ENCODE measurements at regions of chr6 and their contacts with region 1.

Region 1: DNA sequence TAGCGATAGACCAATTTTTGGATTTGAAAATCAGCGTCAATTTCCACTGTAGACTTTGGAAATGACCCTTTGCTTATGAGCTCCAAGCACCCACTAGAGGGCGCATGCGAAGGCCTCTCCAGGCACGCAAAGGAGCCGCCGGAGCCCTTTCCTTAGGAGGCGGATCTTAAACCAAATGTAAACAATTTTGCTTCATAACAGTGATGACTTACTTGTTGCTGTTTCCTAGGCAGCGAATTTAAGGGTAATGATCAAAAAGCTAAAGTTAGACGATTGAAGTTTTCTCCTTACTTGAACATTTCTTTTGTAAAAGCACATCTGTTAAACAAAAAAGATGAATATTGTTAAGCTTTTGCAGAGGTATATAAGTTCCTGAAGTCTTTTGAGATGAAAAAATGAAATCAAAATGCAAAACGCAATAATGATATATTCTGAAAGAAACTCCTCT is 29.2 kb upstream of the EXOC2 start:
- DNase-seq: peak; percentile 81
- H3K4me3 Mint-ChIP-seq: no peak overlapping the region
- H3K27ac Mint-ChIP-seq: no peak overlapping the region
- H3K4me1 Mint-ChIP-seq: peaks cover 14% of the 10 kb centered on the region
- H3K27me3 Mint-ChIP-seq: peaks cover 14% of the 10 kb centered on the region

Region 2: DNA sequence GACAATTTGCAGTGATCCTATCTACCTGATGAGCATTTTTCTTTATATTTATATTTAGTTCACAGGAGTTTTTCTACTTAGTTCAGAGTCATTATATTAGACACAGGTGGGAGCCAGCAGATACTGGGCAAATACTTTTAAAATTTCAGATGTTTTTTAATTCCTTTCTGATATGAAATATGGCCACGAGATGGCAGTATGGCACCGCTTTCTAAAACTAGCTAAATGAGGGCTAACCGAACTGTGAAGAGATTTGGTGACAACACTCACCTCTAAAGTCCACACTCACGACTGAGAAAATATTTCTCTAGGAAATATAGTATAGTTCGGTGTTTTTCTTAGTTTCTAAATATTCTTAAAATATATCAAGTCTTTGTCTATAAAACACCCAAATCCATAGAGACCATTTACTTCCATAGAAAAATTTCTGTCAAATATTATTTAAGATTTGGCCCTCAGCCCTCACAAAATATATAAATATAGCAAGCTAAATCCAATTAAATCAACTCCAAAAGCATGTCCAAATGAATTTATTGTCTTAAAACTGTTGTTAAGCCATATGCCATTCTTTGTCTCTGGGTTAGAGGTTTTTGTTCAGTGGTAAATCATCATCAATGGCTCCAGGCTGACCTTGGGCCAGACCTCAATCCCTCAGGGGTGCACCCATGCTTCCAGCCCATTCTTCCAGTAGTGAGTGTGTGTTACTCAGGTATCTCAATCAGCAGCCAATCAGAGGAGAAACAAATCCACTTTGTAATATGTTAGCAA is 128.8 kb before region 1 on chr6:
- CTCF ChIA-PET with region 1: interaction called, 23 read pairs
- POLR2A ChIA-PET with region 1: no interaction called
- DNase-seq: peak; percentile 70
- H3K4me3 Mint-ChIP-seq: no peak overlapping the region
- H3K27ac Mint-ChIP-seq: no peak overlapping the region
- H3K4me1 Mint-ChIP-seq: peaks cover 16% of the 10 kb centered on the region
- H3K27me3 Mint-ChIP-seq: no peaks in the 10 kb centered on the region

Region 3: DNA sequence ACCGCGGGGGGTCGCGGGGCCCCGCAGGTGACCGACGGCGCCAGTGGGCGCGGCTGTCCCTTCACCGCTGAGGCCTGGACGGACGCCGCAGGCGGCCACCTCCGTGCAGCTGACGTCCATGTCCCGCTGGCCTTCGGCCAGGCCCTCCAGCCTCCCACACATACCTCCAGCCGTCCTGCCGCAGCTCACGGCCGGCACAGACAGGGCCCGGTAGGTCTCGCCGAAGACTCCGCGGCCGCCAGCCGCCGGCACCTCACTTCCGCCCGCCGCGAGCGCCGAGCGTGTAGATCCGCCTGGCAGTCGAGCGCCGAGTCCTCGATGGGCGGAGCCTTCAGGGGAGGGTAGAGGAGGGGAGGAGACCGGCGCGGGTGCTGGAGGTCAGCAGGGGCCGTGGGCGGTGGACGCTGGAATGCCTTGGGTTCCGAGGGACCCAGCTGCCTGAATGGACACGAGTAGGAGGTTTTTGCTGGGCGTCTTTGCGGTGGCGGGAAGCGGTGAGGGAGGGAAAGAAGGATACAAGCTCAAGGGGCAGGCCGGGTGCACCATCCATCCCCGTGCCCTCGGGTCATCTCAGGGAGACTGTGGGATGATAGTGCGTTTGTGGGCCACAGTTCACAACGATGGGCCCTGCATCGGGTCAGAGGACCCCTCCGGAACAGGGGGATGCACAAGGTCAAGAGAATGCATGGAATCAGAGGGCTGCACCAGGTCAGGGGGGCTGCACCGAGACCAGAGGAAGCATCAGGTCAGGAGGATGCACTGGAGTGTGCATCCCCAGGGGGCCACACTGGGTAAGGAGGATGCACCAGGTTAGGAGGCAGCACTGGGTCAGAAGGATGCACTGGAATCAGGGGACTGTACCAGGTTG is 29.0 kb before region 1 on chr6 and contains the start of gene EXOC2:
- CTCF ChIA-PET with region 1: interaction called, 13 read pairs
- POLR2A ChIA-PET with region 1: interaction called, 9 read pairs
- DNase-seq: peak; percentile 90
- H3K4me3 Mint-ChIP-seq: peak within 1 kb of the TSS; percentile 92
- H3K27ac Mint-ChIP-seq: peak within 1 kb of the TSS; percentile 90
- H3K4me1 Mint-ChIP-seq: peaks cover 35% of the 10 kb centered on the region
- H3K27me3 Mint-ChIP-seq: no peaks in the 10 kb centered on the region
- total RNA-seq, gene EXOC2: 31.9 to 35.7 TPM

Region 4: DNA sequence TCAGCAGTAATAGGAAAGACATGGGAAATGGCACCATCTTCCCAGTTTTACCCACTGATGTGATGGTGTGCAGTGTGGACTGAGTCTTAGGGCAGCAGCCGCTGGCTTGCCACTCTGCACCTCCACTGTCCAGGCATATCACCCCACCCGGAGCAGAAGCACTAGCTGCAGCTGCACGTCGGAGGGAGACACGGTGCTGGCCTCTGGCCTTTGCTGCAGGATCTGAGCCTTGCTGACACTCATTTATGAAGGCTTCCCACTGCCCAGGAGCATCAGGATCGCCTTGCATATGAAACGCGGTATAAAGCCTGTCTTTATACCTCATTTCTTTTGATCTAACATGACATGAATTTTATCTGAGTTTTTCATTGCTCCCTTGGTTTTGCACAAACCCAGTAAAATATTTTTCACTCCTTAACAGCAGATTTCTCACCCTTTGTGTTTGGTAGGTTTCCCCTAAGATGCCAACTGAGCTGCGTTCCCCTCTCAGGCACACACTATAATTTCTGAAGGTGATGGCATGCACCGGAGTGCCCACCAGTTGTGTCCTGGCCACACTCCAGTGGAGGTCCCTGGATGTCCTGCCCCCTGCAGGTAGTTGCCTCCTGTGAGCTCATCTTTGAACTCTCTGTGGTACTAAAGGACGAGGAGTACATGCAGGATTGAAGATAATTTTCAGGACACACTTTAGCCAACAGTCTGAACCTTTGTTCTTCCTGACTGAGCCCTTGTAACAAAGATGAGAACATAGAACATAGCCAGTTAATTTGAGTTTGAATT is 20.2 kb before region 1 on chr6:
- CTCF ChIA-PET with region 1: interaction called, 14 read pairs
- POLR2A ChIA-PET with region 1: no interaction called
- DNase-seq: no peak
- H3K4me3 Mint-ChIP-seq: no peak overlapping the region
- H3K27ac Mint-ChIP-seq: no peak overlapping the region
- H3K4me1 Mint-ChIP-seq: peaks cover 11% of the 10 kb centered on the region
- H3K27me3 Mint-ChIP-seq: peaks cover 4% of the 10 kb centered on the region

Region 5: DNA sequence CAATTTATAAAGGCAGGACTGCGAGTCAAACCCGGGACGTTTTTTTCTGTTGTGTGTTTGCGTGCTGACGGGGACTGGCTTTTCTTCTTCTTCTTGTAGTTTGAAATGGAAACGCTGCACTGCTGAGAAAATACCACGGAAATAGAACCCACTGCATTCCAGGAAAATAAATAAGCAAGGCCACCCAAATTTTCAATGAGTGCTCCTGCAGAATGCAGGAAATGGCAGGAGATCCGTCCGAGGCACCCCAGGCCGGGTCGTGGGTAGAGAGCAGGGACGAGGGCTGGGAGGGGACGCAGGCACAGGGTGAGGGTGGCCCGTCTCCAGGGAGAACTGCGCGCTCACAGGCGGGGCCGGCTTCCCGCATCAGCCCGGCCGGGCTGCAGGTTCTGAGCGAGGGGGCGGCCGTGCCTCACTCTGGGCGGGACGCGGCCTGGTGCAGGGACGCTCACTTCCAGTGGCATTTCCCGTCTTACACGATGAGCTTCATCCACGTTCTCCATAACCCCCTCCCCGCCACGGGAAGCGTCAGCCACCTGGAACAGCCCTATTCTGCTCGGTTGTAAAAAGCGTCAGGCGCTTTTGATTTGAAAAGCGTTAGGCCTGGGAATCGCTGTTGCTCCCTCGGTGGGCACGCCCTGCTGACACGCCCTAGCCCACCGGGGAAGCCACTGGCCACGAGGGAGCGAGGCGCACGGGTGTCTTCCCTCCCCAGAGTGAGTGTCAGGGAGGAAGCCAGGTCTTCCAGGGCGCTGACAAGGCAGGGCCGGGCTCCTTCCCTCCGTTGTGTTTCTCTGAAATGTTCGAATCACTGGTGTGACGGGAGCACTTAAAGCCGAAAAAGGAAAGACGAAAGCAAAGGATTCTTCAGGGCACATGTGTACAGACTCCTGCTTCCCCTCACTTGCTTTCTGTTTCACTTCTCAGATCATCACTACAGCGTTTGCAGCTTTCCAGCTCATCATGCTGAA is 11.2 kb before region 1 on chr6:
- CTCF ChIA-PET with region 1: interaction called, 33 read pairs
- POLR2A ChIA-PET with region 1: interaction called, 6 read pairs
- DNase-seq: peak; percentile 68
- H3K4me3 Mint-ChIP-seq: peak overlapping the region; percentile 94
- H3K27ac Mint-ChIP-seq: peak overlapping the region; percentile 99
- H3K4me1 Mint-ChIP-seq: peaks cover 48% of the 10 kb centered on the region
- H3K27me3 Mint-ChIP-seq: peaks cover 4% of the 10 kb centered on the region

Region 6: DNA sequence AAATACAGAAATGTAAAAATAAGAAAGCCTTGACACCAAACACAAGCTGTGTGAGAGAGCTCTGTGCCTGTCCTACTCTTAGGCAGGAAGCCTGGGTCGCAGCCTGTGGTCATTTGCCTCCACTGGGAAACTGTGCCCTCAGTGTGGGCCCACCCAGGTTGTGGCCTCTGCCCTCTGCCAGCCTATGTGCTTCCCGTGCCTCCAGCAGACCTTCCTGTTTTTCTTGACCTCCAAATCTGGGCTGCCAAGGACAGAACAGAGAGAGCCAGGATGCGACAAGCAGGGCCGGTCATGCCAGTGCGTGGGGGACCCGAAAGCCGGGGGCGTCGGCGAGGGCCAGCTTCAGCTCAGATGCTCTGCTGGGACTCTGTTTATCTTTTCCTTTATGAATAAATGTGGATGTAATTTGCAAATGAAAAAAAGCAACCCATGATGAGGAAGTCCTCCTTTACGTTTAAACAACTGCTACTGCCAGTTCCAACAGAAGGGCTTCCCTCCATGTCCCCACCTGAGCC is 160.0 kb after region 1 on chr6:
- CTCF ChIA-PET with region 1: no interaction called
- POLR2A ChIA-PET with region 1: no interaction called
- DNase-seq: no peak
- H3K4me3 Mint-ChIP-seq: no peak overlapping the region
- H3K27ac Mint-ChIP-seq: no peak overlapping the region
- H3K4me1 Mint-ChIP-seq: peaks cover 22% of the 10 kb centered on the region
- H3K27me3 Mint-ChIP-seq: peaks cover 18% of the 10 kb centered on the region

Measured in activated CD4-positive, alpha-beta memory T cell treated with anti-CD3 and anti-CD28 coated beads, Interleukin-2, amount 10 ng/mL, durations not matched to agents 7 days and 5 days (primary cell).